ENCODE measurements at regions of chr1 and their contacts with region 1.

Region 1: GRCh38 chr1:211865180-211865579 is 34.6 kb upstream of the LPGAT1 start:
- DNase-seq: no peak
- ATAC-seq: no peak
- H3K4me3 ChIP-seq: no peak overlapping the region
- H3K27ac ChIP-seq: no peak overlapping the region
- H3K4me1 ChIP-seq: no peaks in the 10 kb centered on the region
- H3K27me3 ChIP-seq: no peaks in the 10 kb centered on the region
- CTCF ChIP-seq: no peak
- EP300 ChIP-seq: no peak
- POLR2A ChIP-seq: no peak
- RAD21 ChIP-seq: no peak

Region 2: GRCh38 chr1:211843018-211843417 is 22.2 kb before region 1 on chr1:
- CTCF ChIA-PET with region 1: no interaction called
- POLR2A ChIA-PET with region 1: no interaction called
- in situ Hi-C with region 1: no loop called
- intact Hi-C with region 1: no loop called
- DNase-seq: no peak
- ATAC-seq: no peak
- H3K4me3 ChIP-seq: peak overlapping the region in 1 of 3 experiments; percentile 7; a peak in 1 of 6 replicates
- H3K27ac ChIP-seq: no peak overlapping the region
- H3K4me1 ChIP-seq: peaks cover 6% of the 10 kb centered on the region; the same call in 1 of the 2 replicates
- H3K27me3 ChIP-seq: no peaks in the 10 kb centered on the region
- CTCF ChIP-seq: no peak
- EP300 ChIP-seq: no peak
- POLR2A ChIP-seq: no peak
- RAD21 ChIP-seq: no peak

Region 3: DNA sequence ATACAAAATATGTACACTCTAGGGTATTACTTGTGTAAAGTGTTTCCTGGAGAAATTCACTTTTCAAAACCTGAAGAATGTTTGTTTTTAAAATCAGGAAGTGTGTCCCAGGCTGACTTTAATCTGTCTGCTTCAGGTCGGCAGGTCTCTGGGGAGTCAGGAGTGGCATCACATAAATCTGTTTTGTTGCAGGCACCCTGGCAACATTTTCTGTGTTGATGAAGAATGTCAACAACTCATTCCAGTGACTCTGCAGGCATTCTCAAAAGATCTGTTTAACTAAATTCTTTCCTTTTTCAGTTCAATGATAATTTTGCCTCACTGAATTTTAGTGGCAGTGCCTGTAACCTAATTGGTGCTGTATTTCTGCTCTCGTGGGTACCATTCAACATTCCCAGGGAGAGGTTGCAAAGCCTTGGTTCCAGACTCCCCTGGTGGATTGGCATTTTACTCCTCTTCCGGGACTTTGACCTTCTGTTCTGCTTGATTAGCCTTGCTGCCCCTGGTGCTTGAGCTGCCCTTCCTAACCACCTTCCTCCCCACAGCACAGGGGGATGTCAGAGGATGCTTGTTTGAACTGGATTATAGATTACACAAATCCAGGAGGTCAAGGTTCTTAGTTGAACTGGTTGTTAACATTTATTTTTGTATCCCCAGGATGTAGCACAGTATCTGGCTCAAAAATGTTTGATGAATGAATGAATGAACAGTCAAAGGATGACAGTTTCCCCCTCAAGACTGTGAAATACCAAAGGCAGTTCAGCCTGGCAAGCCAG is 20.8 kb after region 1 on chr1:
- CTCF ChIA-PET with region 1: no interaction called
- POLR2A ChIA-PET with region 1: no interaction called
- in situ Hi-C with region 1: no loop called
- intact Hi-C with region 1: no loop called
- DNase-seq: peak; percentile 87
- ATAC-seq: peak; percentile 97
- H3K4me3 ChIP-seq: 0 out of 6 replicates have a peak overlapping the region, but pooled peaks of 1 of the 3 experiments have one; percentile 3
- H3K27ac ChIP-seq: peak overlapping the region; percentile 63
- H3K4me1 ChIP-seq: peaks cover 55% of the 10 kb centered on the region
- H3K27me3 ChIP-seq: no peaks in the 10 kb centered on the region
- CTCF ChIP-seq: peak; percentile 41
- EP300 ChIP-seq: peak; percentile 20 to 83; a peak in 2 of 4 replicates
- POLR2A ChIP-seq: no peak
- RAD21 ChIP-seq: 0 out of 2 replicates have a peak, but pooled peaks have one; percentile 22

Region 4: DNA sequence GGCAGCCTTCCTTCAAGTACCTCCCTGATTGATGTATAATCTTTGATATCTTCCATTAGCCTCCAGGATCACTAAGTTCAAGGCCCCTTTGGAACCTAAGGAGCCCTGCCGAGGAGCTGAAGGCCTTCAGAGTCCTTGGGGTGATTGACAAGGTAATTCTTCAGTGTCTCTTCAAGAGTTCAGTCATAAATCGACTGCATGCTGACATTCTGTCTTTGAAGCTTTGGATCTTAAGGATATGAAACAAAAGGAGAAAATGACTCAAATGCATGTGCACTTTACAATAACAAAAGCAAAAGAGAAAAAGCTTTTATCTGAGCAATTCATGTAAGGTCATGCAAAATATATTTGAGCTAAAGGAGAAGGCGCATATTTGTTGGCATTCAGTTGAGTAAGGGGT is 1311.2 kb after region 1 on chr1:
- CTCF ChIA-PET with region 1: no interaction called
- POLR2A ChIA-PET with region 1: no interaction called
- in situ Hi-C with region 1: no loop called
- intact Hi-C with region 1: loop called (anchors 10 kb)
- DNase-seq: no peak
- ATAC-seq: no peak
- H3K4me3 ChIP-seq: no peak overlapping the region
- H3K27ac ChIP-seq: no peak overlapping the region
- H3K4me1 ChIP-seq: no peaks in the 10 kb centered on the region
- H3K27me3 ChIP-seq: no peaks in the 10 kb centered on the region
- CTCF ChIP-seq: no peak
- EP300 ChIP-seq: no peak
- POLR2A ChIP-seq: no peak
- RAD21 ChIP-seq: no peak

Measured in HepG2 (cell line).